T-cell (primary cell): ENCODE measurements at regions of chr12 and their contacts with region 1.

Region 1: GRCh38 chr12:69290545-69291277 is 51.3 kb downstream of the CPSF6 start:
- DNase-seq: peak; percentile 53 to 90 (median 75)
- ATAC-seq: peak; percentile 100
- H3K4me3 ChIP-seq: no peak overlapping the region
- H3K4me3 Mint-ChIP-seq: no peak overlapping the region
- H3K27ac ChIP-seq: no peak overlapping the region
- H3K27ac Mint-ChIP-seq: no peak overlapping the region
- H3K4me1 ChIP-seq: peaks cover 3 to 5% of the 10 kb centered on the region in 2 experiments
- H3K4me1 Mint-ChIP-seq: peaks cover 5 to 19% (median 14%) of the 10 kb centered on the region in 3 donors
- H3K27me3 ChIP-seq: peaks cover 0 to 12% of the 10 kb centered on the region in 2 experiments
- H3K27me3 Mint-ChIP-seq: peaks cover 12 to 43% of the 10 kb centered on the region in 2 donors

Region 2: DNA sequence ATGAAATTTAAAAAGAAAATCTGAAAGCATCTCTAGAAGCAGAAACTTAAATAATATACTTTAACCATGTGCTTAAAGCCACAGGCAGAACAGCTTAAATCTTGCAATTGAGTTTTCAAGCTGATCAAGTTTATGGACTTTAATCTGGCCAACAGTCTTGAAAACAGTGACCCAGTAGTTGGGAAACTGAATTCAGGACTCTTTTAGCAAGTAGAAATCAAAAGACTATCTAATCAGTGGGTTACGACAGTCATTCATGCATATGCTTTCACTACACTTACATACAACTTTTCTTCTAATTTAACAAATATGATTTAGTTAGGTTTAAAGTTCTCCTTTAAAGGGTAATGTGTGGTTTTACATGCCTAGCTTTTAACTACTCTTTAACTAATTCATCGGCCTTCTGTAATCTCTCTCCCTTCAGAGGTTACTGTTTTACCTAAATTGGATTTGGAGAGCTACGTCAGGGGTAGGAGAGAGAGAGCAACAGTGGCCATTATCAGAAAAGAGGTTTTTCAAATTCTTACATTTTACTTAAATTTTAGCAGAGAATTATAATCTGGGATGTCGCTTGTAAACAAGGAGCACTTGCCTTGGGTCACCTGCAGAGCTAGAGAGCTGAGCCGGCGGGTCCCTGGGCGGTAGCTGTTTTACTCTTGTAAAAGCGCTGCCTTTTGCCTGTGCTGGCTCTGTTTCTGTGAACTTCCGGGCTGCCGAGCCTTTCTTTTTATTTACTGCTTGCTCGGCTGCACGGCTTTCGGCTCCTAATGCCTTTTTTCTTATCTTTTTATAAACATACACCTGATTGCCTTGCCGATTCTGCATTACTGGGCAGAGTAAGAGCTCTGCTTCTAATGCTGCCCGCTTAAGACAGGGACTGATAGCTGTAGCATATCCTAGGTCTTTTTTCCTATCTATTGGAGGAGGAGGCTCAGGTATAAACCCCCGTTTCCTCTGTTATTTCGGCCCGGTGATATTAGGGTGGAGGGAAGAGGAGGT is 40.1 kb after region 1 on chr12:
- CTCF ChIA-PET with region 1: interaction called, 3 to 11 read pairs
- POLR2A ChIA-PET with region 1: interaction called, 6 to 8 read pairs
- DNase-seq: peak; percentile 51 to 78 (median 66)
- ATAC-seq: peak; percentile 71 to 81 (median 76)
- H3K4me3 ChIP-seq: peak overlapping the region; percentile 53 to 72
- H3K4me3 Mint-ChIP-seq: peak overlapping the region; percentile 83 to 91 (median 91)
- H3K27ac ChIP-seq: peak overlapping the region; percentile 91
- H3K27ac Mint-ChIP-seq: peak overlapping the region; percentile 96 to 100
- H3K4me1 ChIP-seq: peaks cover 20 to 22% of the 10 kb centered on the region in 2 experiments
- H3K4me1 Mint-ChIP-seq: peaks cover 58 to 65% (median 63%) of the 10 kb centered on the region in 3 donors
- H3K27me3 ChIP-seq: no peaks in the 10 kb centered on the region
- H3K27me3 Mint-ChIP-seq: no peaks in the 10 kb centered on the region

Region 3: DNA sequence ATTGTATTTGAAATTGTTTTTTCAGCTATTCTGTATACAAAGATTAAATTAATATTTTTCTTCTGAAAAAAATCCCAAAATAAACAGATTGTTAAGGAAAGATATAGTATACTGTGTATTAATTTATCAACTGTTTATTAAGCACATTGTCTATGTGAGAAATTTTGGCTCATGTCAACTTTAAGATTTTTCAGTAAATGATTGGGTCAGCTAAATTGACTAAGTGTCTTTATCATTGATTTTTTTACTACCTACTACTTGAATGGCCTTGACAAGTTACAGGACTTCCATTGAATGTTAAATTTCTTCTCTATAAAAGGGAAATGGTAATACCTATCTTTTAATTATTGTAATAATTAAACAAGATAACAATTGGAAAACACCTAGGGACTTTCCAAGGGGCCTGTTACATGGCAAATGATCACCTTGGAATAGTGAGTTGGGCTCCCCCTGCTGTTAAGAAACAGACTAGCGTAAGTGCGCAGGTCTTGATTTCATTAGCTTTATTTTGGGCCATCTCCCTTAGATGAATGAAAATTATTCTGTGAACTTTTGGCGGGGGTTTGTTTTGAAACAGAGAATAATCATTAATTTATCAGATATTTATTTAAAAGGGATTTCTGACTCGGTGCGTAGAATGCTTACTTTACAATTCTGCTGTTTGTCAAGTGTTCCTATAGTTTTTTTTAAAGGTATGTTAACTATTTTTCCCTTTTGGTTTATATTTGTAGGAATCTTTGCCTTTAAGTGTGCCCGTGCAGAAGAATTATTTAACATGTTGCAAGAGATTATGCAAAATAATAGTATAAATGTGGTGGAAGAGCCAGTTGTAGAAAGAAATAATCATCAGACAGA is 280.1 kb after region 1 on chr12:
- CTCF ChIA-PET with region 1: interaction called, 6 to 32 read pairs
- POLR2A ChIA-PET with region 1: no interaction called
- DNase-seq: peak in 33 of 35 experiments; percentile 6 to 86 (median 44)
- ATAC-seq: peak; percentile 54 to 87 (median 56)
- H3K4me3 ChIP-seq: no peak overlapping the region
- H3K4me3 Mint-ChIP-seq: no peak overlapping the region
- H3K27ac ChIP-seq: peak overlapping the region; percentile 54
- H3K27ac Mint-ChIP-seq: peak overlapping the region in 1 of 2 donors; percentile 31
- H3K4me1 ChIP-seq: no peaks in the 10 kb centered on the region
- H3K4me1 Mint-ChIP-seq: peaks cover 0 to 6% (median 4%) of the 10 kb centered on the region in 3 donors
- H3K27me3 ChIP-seq: no peaks in the 10 kb centered on the region
- H3K27me3 Mint-ChIP-seq: no peaks in the 10 kb centered on the region

Region 4: DNA sequence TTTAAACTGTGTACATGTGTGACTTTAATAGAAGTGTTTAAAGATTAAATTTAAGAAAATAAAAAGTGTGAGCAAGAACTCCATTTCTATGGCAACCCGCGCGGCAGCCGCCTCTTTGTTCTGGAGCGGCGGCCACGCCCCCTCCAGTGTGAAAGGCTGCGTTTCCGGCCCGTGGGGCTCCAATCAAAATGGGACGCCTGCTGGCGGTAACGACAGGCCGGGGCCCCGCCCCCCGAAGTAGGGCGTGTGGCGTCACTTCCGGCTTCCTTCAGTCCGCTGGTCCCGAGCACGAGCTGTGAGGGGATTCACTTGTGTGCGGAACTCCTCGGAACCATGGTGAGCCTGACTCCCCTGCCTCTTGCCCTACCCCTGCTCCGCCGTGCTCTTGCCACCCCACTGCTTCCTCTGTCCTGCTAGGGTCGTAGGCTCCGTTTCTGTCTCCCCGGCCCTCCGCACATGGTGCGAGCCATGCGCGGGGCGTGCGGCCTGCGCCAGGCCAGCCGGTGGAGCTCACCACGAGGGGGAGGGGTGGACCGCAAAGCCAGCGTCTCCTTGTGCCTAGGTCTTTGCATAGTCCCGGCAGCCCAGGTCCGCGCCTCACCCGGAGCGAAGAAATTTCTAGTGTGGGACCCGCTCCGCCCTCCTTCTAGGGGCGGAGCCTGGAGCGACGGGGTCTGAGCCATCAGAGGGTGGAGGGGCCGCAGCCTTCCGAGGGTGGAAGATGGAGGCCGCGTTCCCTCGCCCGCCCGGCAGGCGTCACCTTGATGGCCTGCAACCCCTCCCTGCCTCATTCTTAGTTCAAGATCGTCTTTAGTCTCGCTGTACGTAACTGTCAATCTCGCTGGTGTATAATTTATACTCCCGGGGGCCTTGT is 294.7 kb after region 1 on chr12 and contains the start of gene CCT2:
- CTCF ChIA-PET with region 1: no interaction called
- POLR2A ChIA-PET with region 1: interaction called in 1 of 2 experiments, 10 read pairs
- DNase-seq: peak; percentile 89 to 98 (median 96)
- ATAC-seq: peak; percentile 93 to 95 (median 95)
- H3K4me3 ChIP-seq: peak within 1 kb of the TSS; percentile 99 to 100
- H3K4me3 Mint-ChIP-seq: peak within 1 kb of the TSS; percentile 93 to 100 (median 95)
- H3K27ac ChIP-seq: peak within 1 kb of the TSS; percentile 94
- H3K27ac Mint-ChIP-seq: peak within 1 kb of the TSS; percentile 88 to 94
- H3K4me1 ChIP-seq: peaks cover 7 to 10% of the 10 kb centered on the region in 2 experiments
- H3K4me1 Mint-ChIP-seq: peaks cover 8 to 21% (median 12%) of the 10 kb centered on the region in 3 donors
- H3K27me3 ChIP-seq: no peaks in the 10 kb centered on the region
- H3K27me3 Mint-ChIP-seq: no peaks in the 10 kb centered on the region
- total RNA-seq, gene CCT2: 108 to 183 (median 111) TPM